ENCODE measurements at regions of chr5 and their contacts with region 1.

Region 1: DNA sequence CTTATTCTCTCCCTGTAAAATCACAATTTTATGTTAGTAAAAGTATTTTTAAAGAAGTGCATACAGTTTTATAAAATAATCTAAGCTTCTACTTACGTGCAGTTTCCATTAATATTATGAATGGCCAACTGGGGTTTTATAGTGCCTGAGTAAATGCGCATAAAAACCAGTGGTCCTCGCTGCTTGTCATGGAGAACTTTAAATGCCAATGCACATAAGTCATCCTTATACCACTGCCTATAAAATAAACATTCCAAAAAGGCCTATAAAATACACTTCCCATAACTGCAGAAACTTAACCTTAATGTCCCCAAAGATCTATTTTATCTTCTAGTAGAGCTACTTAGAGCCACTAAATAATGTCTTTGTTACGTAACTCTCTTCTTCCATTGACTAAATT is 28.5 kb downstream of the GFM2 start:
- DNase-seq: no peak
- ATAC-seq: no peak
- H3K4me3 ChIP-seq: no peak overlapping the region
- H3K27ac ChIP-seq: no peak overlapping the region
- H3K4me1 ChIP-seq: no peaks in the 10 kb centered on the region
- H3K27me3 ChIP-seq: no peaks in the 10 kb centered on the region
- CTCF ChIP-seq: no peak

Region 2: DNA sequence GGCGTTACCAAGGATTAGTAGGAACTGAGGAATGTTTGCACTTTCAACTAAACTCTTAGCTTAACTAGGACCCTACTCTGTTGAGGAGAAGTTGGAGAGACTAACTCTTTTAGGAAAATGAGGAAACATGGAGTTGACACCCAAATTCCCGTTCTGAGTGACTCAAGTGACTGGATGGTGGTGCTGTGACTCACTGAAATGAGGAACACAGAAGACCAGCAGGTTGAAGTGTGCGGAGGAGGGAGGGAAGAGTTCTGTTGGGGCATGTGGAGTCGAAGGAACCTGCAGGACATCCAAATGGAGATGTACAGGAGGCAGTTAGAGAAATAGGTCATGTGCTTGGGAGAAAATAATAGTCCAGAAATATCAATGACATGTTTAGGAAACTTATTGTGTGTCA is 45.2 kb before region 1 on chr5:
- intact Hi-C with region 1: no loop called
- DNase-seq: no peak
- ATAC-seq: no peak
- H3K4me3 ChIP-seq: no peak overlapping the region
- H3K27ac ChIP-seq: no peak overlapping the region
- H3K4me1 ChIP-seq: no peaks in the 10 kb centered on the region
- H3K27me3 ChIP-seq: no peaks in the 10 kb centered on the region
- CTCF ChIP-seq: no peak

Region 3: DNA sequence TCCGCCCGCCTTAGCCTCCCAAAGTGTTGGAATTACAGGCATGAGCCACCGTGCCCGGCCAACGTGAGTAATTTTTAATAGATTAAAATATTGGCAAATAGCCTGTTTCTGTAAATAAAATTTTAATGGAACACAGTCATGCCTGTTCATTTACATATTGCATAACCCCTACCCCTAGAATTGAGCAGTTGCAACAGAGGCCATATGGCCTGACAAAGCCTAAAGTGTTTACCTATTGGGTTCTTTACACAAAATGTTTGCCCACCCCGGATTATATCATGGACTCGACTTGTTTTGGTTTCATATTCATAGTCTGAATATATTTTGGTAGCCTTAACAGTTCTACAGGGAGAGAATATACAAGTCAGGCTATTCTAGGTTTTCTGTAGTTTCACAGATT is 34.0 kb after region 1 on chr5:
- intact Hi-C with region 1: loop called in 1 of 2 experiments (anchors 2 kb)
- DNase-seq: no peak
- ATAC-seq: no peak
- H3K4me3 ChIP-seq: no peak overlapping the region
- H3K27ac ChIP-seq: no peak overlapping the region
- H3K4me1 ChIP-seq: peaks cover 6% of the 10 kb centered on the region
- H3K27me3 ChIP-seq: no peaks in the 10 kb centered on the region
- CTCF ChIP-seq: no peak

Measured in psoas muscle (tissue), 8 donors.